ENCODE measurements at regions of chr12 and their contacts with region 1.

Region 1: DNA sequence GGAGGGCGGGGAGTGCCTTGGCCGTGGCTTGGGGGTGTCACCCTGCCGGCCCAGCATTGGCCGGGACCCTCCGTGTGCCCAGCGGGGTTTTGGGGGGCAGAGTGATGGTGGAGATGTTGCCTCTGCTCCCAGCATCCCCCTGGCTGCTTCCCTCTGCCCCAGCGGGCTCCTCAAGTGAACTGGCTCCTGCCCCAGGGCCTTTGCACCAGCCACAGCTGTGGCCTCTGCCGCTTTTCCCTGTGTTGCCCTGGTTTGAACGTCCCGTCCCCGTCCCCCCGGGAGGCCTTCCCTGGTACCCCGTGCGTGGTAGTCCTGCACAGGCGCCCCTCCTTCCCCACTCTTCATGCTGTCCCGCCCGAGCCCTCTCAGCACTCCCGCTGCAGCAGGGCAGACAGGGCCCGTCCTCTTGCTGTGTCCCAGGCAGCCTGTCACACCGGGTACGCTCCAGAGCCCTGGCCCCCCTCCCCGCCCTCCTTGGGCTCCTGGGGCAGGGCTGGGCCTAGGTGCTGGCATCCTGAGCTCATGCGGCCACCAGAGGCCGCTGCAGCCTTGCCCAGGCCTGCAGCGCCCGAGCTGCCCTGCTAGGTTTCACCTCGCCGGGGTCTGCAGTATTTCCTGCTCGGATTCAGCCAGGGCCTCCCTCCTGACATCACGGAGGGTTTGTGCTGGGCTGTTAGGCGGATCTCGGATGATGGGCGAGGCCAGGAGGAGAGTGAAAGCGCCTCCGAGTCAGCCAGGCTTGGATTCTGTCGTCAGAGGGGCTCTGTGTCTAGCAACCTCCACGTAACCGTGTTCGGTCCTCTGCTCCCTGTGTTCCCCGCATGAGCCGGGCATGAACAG is 9.5 kb downstream of the NOC4L start:
- DNase-seq: peak; percentile 91
- H3K4me3 Mint-ChIP-seq: no peak overlapping the region
- H3K27ac Mint-ChIP-seq: no peak overlapping the region
- H3K4me1 Mint-ChIP-seq: peaks cover 1% of the 10 kb centered on the region
- H3K27me3 Mint-ChIP-seq: no peaks in the 10 kb centered on the region

Region 2: DNA sequence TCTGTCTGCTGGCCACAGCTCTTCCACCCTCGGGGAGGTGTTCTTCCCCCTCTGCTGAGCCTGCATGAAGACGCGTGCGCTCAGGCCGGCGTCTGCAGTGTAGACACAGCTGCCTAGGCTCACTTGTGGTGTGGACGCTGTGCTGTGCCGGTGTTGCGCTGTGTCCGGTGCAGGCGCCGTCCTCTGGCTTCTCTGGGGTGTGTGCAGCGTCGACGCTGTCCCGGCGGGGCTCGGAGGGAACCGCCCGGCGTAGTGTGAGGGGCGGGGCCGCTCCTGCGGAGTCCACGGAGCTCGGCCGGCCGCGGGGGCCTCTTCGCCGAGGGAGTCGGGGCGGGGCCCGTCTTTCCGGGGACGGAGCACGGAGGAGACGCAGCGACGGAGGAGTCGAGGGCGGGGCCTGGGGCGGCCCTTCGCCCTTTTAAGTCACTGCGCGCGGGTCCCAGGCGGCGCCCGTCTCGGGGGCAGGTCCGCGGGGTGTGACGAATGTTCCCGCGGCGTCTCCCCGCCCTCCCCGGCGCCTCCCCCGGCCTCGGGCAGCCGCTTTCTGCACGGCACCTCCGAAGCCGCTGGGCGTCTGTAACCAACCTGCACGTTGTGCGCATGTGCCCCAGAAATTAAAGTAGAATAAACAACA is 35.8 kb after region 1 on chr12:
- intact Hi-C with region 1: loop called (anchors 5 kb)
- DNase-seq: peak; percentile 98
- H3K4me3 Mint-ChIP-seq: peak overlapping the region; percentile 99
- H3K27ac Mint-ChIP-seq: peak overlapping the region; percentile 91
- H3K4me1 Mint-ChIP-seq: peaks cover 26% of the 10 kb centered on the region
- H3K27me3 Mint-ChIP-seq: peaks cover 2% of the 10 kb centered on the region

Region 3: GRCh38 chr12:132218915-132219314 is 65.2 kb after region 1 on chr12:
- intact Hi-C with region 1: loop called (anchors 1 kb)
- DNase-seq: peak; percentile 79
- H3K4me3 Mint-ChIP-seq: no peak overlapping the region
- H3K27ac Mint-ChIP-seq: no peak overlapping the region
- H3K4me1 Mint-ChIP-seq: peaks cover 9% of the 10 kb centered on the region
- H3K27me3 Mint-ChIP-seq: peaks cover 12% of the 10 kb centered on the region

Region 4: GRCh38 chr12:132414634-132415326 is 261.1 kb after region 1 on chr12:
- intact Hi-C with region 1: loop called (anchors 2 kb)
- DNase-seq: peak; percentile 94
- H3K4me3 Mint-ChIP-seq: no peak overlapping the region
- H3K27ac Mint-ChIP-seq: no peak overlapping the region
- H3K4me1 Mint-ChIP-seq: no peaks in the 10 kb centered on the region
- H3K27me3 Mint-ChIP-seq: peaks cover 2% of the 10 kb centered on the region

Region 5: DNA sequence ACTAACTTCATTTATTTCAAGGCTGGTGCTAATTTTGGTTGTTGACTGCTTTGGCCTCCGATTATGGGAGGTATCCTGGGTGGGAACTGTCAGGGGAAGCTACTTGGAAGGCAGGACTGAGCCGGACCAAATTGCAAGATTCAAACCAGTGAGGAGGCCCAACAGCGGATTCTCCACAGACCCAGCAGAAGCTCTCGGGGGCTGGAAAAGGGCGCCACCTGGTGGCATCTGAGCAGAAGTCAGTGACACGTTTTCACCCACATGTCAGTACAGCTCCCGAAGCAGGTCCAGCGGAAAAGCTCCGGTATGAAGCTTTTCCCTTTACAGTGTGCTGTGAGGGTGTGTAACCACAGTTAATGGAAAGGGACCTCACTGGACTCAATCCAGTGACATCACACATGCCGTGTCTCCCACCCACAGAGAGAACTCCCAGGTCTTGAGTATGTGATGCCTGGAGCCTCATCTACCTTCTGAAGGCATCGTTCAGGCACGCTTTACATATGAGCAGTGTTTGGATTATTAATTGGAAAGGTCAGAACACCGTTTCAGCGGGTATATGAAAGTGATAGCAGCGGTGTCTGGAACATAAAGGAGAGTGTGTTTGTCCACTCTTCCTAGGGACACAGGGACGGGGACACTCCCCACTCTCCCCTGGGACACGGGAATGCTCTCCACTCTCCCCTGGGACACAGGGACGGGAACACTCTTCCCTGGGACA is 461.3 kb after region 1 on chr12:
- intact Hi-C with region 1: loop called (anchors 10 kb)
- DNase-seq: peak; percentile 93
- H3K4me3 Mint-ChIP-seq: no peak overlapping the region
- H3K27ac Mint-ChIP-seq: peak overlapping the region; percentile 54
- H3K4me1 Mint-ChIP-seq: peaks cover 4% of the 10 kb centered on the region
- H3K27me3 Mint-ChIP-seq: peaks cover 33% of the 10 kb centered on the region